ENCODE measurements at regions of chr6 and their contacts with region 1.

Region 1: GRCh38 chr6:32971581-32972352 is 3.4 kb downstream of the BRD2 start:
- DNase-seq: peak; percentile 99 to 100 (median 100)
- ATAC-seq: peak; percentile 73
- H3K4me3 ChIP-seq: peak overlapping the region; percentile 98
- H3K4me3 Mint-ChIP-seq: peak overlapping the region; percentile 89 to 100 (median 98)
- H3K27ac ChIP-seq: peak overlapping the region; percentile 94
- H3K27ac Mint-ChIP-seq: peak overlapping the region; percentile 78 to 100 (median 99)
- H3K4me1 ChIP-seq: peaks cover 26 to 32% of the 10 kb centered on the region in 2 donors
- H3K4me1 Mint-ChIP-seq: peaks cover 31 to 47% (median 40%) of the 10 kb centered on the region in 7 donors
- H3K27me3 ChIP-seq: no peaks in the 10 kb centered on the region
- H3K27me3 Mint-ChIP-seq: peaks cover 0 to 5% (median 0%) of the 10 kb centered on the region in 5 donors

Region 2: GRCh38 chr6:31901953-31902643 is 1069.7 kb before region 1 on chr6 and contains the start of gene ZBTB12:
- CTCF ChIA-PET with region 1: no interaction called
- POLR2A ChIA-PET with region 1: interaction called, 4 read pairs
- intact Hi-C with region 1: loop called in 1 of 2 experiments (anchors 2 kb)
- DNase-seq: peak; percentile 76 to 90 (median 84)
- ATAC-seq: peak; percentile 76
- H3K4me3 ChIP-seq: peak within 1 kb of the TSS; percentile 80
- H3K4me3 Mint-ChIP-seq: peak within 1 kb of the TSS; percentile 81 to 96 (median 88)
- H3K27ac ChIP-seq: peak within 1 kb of the TSS; percentile 83
- H3K27ac Mint-ChIP-seq: peak within 1 kb of the TSS; percentile 75 to 94 (median 86)
- H3K4me1 ChIP-seq: peaks cover 12 to 16% of the 10 kb centered on the region in 2 donors
- H3K4me1 Mint-ChIP-seq: peaks cover 18 to 34% (median 32%) of the 10 kb centered on the region in 7 donors
- H3K27me3 ChIP-seq: no peaks in the 10 kb centered on the region
- H3K27me3 Mint-ChIP-seq: peaks cover 0 to 11% (median 0%) of the 10 kb centered on the region in 5 donors
- total RNA-seq, gene ZBTB12: 0.77 to 4.5 (median 2.5) TPM

Region 3: DNA sequence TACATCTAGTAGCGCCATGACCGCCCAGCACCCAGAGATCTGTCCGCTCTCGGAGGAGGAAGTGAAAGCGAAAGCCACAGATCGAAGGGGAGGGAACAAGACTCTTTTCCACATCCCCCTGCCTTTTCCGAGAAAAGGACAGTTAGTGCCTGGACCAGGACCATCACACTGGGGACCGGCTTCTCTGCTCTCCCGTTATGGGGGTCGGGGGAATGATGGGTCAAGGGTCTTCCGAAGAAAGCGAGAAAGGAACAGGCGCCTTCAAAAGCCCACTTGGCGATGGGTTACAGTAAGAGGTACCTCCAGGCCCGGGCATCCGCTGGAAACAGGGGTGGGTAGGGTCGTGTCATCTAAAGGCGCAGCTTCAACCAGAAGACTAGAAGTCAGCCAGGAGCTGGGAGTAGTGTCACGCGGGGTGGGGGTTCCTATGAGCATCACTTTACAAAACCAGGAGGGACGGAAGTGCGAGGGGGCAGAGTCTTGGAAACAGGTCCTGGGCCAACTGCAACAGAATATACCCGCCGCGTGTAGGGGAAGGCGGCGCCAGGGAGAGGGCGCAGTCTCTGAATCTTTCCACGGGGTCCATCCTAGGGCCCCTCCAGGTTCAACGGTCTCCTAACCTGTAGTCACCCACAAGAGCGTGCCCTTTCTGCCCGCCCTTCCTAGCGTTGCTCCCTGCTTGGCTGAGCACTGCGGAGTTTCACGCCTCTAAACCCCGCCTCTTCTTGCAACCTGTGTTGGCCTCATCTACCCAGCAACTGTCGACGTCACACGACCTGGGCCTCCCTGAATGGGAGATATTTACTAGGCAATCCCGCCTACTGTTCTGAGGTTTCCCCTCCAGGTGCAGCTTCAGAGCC is 127.6 kb before region 1 on chr6 and contains the start of gene PSMB8:
- CTCF ChIA-PET with region 1: interaction called, 16 read pairs
- POLR2A ChIA-PET with region 1: interaction called, 347 read pairs
- intact Hi-C with region 1: loop called (anchors 1 kb)
- DNase-seq: peak; percentile 92 to 99 (median 97)
- ATAC-seq: peak; percentile 90
- H3K4me3 ChIP-seq: peak within 1 kb of the TSS; percentile 97
- H3K4me3 Mint-ChIP-seq: peak within 1 kb of the TSS; percentile 92 to 99 (median 98)
- H3K27ac ChIP-seq: peak within 1 kb of the TSS; percentile 97
- H3K27ac Mint-ChIP-seq: peak within 1 kb of the TSS; percentile 99 to 100 (median 100)
- H3K4me1 ChIP-seq: peaks cover 71 to 72% of the 10 kb centered on the region in 2 donors
- H3K4me1 Mint-ChIP-seq: peaks cover 66 to 83% (median 79%) of the 10 kb centered on the region in 7 donors
- H3K27me3 ChIP-seq: no peaks in the 10 kb centered on the region
- H3K27me3 Mint-ChIP-seq: no peaks in the 10 kb centered on the region
- total RNA-seq, gene PSMB8: 111 to 419 (median 115) TPM

Region 4: GRCh38 chr6:32933636-32934085 is 38.1 kb before region 1 on chr6:
- CTCF ChIA-PET with region 1: interaction called, 31 read pairs
- POLR2A ChIA-PET with region 1: interaction called, 614 read pairs
- intact Hi-C with region 1: loop called (anchors 1 kb)
- DNase-seq: peak; percentile 47 to 77 (median 67)
- ATAC-seq: peak; percentile 79
- H3K4me3 ChIP-seq: no peak overlapping the region
- H3K4me3 Mint-ChIP-seq: no peak overlapping the region
- H3K27ac ChIP-seq: no peak overlapping the region
- H3K27ac Mint-ChIP-seq: peak overlapping the region in 2 of 9 donors; percentile 32 to 45
- H3K4me1 ChIP-seq: no peaks in the 10 kb centered on the region
- H3K4me1 Mint-ChIP-seq: peaks cover 0 to 24% (median 6%) of the 10 kb centered on the region in 7 donors
- H3K27me3 ChIP-seq: no peaks in the 10 kb centered on the region
- H3K27me3 Mint-ChIP-seq: peaks cover 0 to 35% (median 0%) of the 10 kb centered on the region in 5 donors

Region 5: DNA sequence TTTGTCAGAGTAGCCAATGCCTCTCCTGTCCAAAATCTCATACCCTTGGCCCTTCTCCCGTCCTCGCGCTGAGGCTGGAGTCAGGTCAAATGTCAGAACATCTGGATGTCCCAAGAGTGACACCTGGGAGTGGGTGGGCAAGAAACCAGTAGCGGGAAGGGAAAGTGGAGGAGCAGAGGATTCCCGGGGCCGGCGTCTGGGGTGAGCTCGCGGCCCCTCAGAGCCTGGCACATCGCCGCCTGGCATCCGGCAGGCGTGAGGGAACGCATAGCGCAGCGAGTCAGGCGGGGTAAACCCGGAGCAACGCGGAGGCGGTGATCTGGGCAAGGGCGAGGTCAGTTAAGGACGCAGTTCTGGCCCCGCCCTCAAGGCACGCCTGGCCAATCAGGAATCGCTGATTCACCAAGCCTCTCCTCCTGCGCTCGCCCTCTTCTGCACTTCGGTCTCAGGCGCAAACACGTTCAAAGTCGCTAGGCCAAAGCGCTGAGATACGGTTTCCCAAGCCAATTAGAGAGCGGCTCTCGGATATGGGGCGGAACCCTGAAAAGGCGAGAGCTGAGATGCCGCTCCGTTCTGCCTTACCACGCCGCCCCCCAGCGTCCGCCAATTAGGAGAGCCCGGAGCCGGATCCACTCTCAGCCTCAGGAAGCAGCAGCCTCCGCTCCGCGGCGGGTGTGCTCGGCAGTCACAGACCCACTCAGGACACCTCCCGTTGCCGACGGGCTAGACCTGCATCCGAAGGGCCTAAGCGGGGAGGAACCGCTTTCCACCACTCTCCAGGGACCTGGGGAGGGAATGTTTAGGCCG is 277.4 kb after region 1 on chr6:
- CTCF ChIA-PET with region 1: no interaction called
- POLR2A ChIA-PET with region 1: interaction called, 30 read pairs
- intact Hi-C with region 1: loop called in 1 of 2 experiments (anchors 1 kb)
- DNase-seq: peak; percentile 79 to 97 (median 94)
- ATAC-seq: peak; percentile 91
- H3K4me3 ChIP-seq: peak overlapping the region; percentile 81
- H3K4me3 Mint-ChIP-seq: peak overlapping the region; percentile 81 to 94 (median 90)
- H3K27ac ChIP-seq: peak overlapping the region; percentile 96
- H3K27ac Mint-ChIP-seq: peak overlapping the region; percentile 82 to 98 (median 94)
- H3K4me1 ChIP-seq: peaks cover 11 to 15% of the 10 kb centered on the region in 2 donors
- H3K4me1 Mint-ChIP-seq: peaks cover 26 to 43% (median 35%) of the 10 kb centered on the region in 7 donors
- H3K27me3 ChIP-seq: no peaks in the 10 kb centered on the region
- H3K27me3 Mint-ChIP-seq: peaks cover 0 to 4% (median 0%) of the 10 kb centered on the region in 5 donors

Region 6: GRCh38 chr6:33344701-33345697 is 373.2 kb after region 1 on chr6:
- CTCF ChIA-PET with region 1: no interaction called
- POLR2A ChIA-PET with region 1: interaction called, 11 read pairs
- intact Hi-C with region 1: no loop called
- DNase-seq: peak; percentile 28 to 87 (median 82)
- ATAC-seq: peak; percentile 60
- H3K4me3 ChIP-seq: peak overlapping the region; percentile 64
- H3K4me3 Mint-ChIP-seq: peak overlapping the region; percentile 68 to 89 (median 86)
- H3K27ac ChIP-seq: peak overlapping the region; percentile 60
- H3K27ac Mint-ChIP-seq: peak overlapping the region; percentile 88 to 99 (median 96)
- H3K4me1 ChIP-seq: peaks cover 23 to 33% of the 10 kb centered on the region in 2 donors
- H3K4me1 Mint-ChIP-seq: peaks cover 22 to 54% (median 41%) of the 10 kb centered on the region in 7 donors
- H3K27me3 ChIP-seq: no peaks in the 10 kb centered on the region
- H3K27me3 Mint-ChIP-seq: peaks cover 0 to 7% (median 0%) of the 10 kb centered on the region in 5 donors